Spleen (tissue), 13 donors: ENCODE measurements at regions of chr7 and their contacts with region 1.

Region 1: DNA sequence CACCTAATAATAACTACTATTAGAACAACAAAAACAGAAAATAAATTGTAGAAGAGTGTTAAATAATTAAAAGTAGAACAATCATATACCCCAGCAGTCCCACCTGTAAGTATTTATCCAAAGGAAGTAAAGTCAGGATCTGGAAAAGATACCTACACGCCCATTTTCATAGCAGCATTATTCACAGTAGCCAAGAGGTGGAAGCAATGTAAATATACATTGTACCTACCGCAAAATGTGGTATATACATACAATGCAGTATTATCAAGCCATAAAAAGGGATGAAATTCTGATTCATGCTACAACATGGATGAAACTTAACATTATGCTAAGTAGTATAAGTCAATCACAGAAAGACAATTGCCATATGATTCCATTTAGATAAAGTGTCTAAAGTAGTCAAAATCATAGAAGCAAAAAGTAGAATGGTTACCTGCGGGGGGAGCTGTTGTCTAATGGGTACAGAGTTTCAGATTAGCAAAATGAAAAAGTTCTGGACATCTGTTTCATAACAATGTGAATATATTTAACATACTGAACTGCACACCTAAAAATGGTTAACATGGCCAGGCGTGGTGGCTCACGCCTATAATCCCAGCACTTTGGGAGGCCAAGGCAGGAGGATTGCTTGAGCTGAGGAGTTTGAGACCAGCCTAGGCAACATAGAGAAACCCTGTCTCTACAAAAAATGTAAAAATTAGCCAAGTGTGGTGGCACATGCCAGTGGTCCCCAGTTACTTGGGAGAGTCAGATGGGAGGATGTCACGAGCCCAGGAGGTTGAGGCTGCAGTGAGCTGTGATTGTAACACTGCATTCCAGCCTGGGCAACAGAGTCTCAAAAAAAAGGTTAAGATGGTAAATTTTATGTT is 6.0 kb upstream of the TMED4 start:
- DNase-seq: no peak
- H3K4me3 ChIP-seq: no peak overlapping the region
- H3K27ac ChIP-seq: no peak overlapping the region
- H3K4me1 ChIP-seq: peaks cover 0 to 13% (median 7%) of the 10 kb centered on the region in 6 donors
- H3K27me3 ChIP-seq: no peaks in the 10 kb centered on the region
- CTCF ChIP-seq: peak in 10 of 11 experiments; percentile 35 to 78 (median 67)
- POLR2A ChIP-seq: no peak

Region 2: DNA sequence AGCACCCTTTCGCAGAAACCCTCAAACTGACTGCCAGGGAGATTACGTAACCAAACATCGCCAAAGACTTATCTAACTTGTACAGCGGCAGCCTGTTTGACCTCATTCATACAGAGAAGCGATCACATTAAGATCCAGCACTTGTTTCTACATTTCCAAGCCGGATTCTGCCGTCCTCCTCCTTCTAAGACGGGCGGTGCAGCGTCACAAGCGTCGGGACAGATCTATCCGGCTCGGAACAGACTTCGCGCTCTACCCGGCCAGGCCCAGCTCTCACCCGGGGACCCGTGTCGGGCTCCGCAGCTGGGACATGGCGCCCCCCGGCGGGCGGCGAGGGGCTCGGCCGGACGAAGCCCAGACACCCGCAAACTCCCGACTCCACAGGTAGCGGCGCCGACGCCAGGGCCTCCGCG is 259.4 kb after region 1 on chr7:
- intact Hi-C with region 1: loop called (anchors 5 kb)
- DNase-seq: peak; percentile 98
- H3K4me3 ChIP-seq: peak overlapping the region; percentile 43 to 83 (median 63)
- H3K27ac ChIP-seq: peak overlapping the region; percentile 69 to 99 (median 98)
- H3K4me1 ChIP-seq: peaks cover 13 to 69% (median 50%) of the 10 kb centered on the region in 6 donors
- H3K27me3 ChIP-seq: no peaks in the 10 kb centered on the region
- CTCF ChIP-seq: peak; percentile 65 to 98 (median 91)
- POLR2A ChIP-seq: no peak